OCI-LY7 (cell line): ENCODE measurements at regions of chr11 and their contacts with region 1.

Region 1: GRCh38 chr11:75248690-75249268 is 8.2 kb downstream of the TPBGL start:
- DNase-seq: peak; percentile 87
- H3K4me3 ChIP-seq: no peak overlapping the region
- H3K27ac ChIP-seq: no peak overlapping the region
- H3K4me1 ChIP-seq: no peaks in the 10 kb centered on the region
- CTCF ChIP-seq: peak; percentile 100

Region 2: DNA sequence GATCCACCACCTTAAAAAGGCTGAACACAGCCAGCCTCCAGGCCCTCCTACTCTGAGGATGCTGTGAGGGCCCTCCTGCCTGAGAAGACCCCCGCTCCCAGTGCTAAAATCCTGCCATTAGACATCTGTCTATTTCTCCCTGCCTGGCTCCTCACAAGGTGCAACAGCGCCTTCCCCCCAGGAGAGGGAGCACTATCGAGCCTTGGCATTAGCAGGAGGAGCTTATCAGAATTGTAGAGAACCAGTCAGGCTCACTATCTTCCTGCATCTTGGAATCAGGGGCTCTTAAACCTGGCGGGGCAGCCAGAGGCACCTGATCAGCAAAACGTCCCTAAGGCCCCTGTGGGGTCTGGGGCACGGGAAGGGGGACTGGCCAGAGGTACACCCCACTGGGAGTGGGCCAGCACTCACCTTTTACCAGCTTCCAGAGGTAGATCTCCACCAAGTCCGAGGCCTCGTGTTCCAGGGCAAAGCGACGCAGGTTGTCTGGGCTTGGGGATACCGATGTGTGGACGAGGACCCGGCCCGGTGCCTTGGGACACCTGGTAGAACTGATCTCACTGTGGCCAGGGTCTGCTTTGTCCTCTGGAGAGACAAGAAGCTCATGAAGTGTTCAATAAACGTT is 546.3 kb before region 1 on chr11:
- CTCF ChIA-PET with region 1: no interaction called
- POLR2A ChIA-PET with region 1: no interaction called
- intact Hi-C with region 1: loop called (anchors 5 kb)
- DNase-seq: peak; percentile 63
- H3K4me3 ChIP-seq: no peak overlapping the region
- H3K27ac ChIP-seq: no peak overlapping the region
- H3K4me1 ChIP-seq: no peaks in the 10 kb centered on the region
- CTCF ChIP-seq: peak; percentile 89

Region 3: DNA sequence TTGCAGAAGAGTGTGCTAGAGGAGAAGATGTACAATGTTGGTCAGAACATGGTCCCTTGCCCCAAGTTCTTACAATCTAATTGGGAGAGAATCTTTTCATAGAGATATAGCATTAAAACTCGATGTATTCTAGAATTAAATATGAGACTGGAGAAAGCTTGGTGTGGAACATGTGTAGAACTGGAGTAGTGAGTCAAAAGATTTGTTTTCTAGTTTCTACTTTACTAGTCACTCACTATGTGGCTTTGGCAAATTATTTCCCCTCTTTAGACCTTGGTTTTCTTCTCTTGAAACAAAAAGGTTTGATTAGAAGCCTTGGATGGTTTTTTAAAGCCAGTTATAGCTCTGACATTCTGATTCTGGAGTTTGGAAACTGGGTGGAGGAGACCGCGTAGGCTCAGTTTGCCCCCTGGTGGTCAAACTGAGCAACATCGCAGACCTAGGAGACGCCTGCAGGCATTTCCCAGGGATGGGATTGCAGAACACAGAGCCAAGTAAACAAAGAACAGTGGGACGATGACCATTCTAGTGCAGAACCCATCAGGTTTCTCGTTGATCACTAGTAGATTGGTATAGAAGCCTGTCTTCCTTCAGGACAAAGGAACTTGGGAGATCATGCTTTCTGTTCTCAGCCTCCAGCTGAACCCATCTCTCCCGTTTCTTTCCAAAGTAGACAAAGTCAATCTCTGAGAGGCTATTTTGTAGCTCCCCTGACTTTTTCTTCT is 509.1 kb before region 1 on chr11:
- CTCF ChIA-PET with region 1: no interaction called
- POLR2A ChIA-PET with region 1: no interaction called
- intact Hi-C with region 1: loop called (anchors 1 kb)
- DNase-seq: peak; percentile 71
- H3K4me3 ChIP-seq: no peak overlapping the region
- H3K27ac ChIP-seq: no peak overlapping the region
- H3K4me1 ChIP-seq: no peaks in the 10 kb centered on the region
- CTCF ChIP-seq: peak; percentile 96

Region 4: GRCh38 chr11:74929431-74930363 is 319.1 kb before region 1 on chr11:
- CTCF ChIA-PET with region 1: no interaction called
- POLR2A ChIA-PET with region 1: no interaction called
- intact Hi-C with region 1: loop called (anchors 2 kb)
- DNase-seq: peak; percentile 91
- H3K4me3 ChIP-seq: no peak overlapping the region
- H3K27ac ChIP-seq: no peak overlapping the region
- H3K4me1 ChIP-seq: no peaks in the 10 kb centered on the region
- CTCF ChIP-seq: peak; percentile 99

Region 5: GRCh38 chr11:75022759-75023396 is 225.9 kb before region 1 on chr11:
- CTCF ChIA-PET with region 1: interaction called, 5 read pairs
- POLR2A ChIA-PET with region 1: no interaction called
- intact Hi-C with region 1: loop called (anchors 1 kb)
- DNase-seq: peak; percentile 80
- H3K4me3 ChIP-seq: no peak overlapping the region
- H3K27ac ChIP-seq: no peak overlapping the region
- H3K4me1 ChIP-seq: no peaks in the 10 kb centered on the region
- CTCF ChIP-seq: peak; percentile 98

Region 6: DNA sequence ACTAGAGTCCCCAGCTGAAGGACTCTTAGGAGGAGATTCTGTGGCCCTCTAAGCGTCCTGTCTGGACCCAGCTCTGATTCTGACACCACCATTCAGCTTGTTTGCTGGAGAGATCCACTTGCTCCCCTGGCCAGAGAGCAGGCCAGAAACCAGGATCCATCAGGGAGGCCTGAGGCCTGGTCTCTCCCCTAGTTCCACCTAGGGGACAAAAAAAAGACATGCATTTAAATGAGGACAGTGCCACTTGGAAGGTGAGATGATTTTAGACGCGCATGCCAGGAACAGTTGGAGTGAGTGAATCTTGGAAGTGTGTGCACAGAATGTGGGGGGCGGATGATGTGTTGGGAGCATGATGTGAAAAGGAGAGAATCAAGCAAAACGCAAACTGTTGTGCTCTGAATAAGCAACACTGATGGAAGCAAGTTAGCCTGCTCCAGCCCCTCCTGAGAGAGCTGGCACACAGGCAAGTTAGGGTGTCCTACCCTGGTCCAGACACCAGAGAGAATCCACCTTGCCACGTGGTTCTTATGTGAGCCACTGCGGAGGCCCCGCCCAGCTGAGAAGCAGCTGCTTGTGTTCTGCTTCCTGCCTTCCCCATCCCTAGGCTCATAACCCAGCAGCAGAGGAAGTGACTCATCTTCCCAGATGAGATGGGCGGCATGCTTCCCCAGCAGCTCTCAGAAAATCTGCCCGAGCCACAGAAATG is 105.9 kb before region 1 on chr11:
- CTCF ChIA-PET with region 1: interaction called, 19 read pairs
- POLR2A ChIA-PET with region 1: interaction called, 4 read pairs
- intact Hi-C with region 1: loop called (anchors 1 kb)
- DNase-seq: peak; percentile 83
- H3K4me3 ChIP-seq: peak overlapping the region; percentile 11
- H3K27ac ChIP-seq: peak overlapping the region; percentile 69
- H3K4me1 ChIP-seq: peaks cover 56% of the 10 kb centered on the region
- CTCF ChIP-seq: no peak

Region 7: DNA sequence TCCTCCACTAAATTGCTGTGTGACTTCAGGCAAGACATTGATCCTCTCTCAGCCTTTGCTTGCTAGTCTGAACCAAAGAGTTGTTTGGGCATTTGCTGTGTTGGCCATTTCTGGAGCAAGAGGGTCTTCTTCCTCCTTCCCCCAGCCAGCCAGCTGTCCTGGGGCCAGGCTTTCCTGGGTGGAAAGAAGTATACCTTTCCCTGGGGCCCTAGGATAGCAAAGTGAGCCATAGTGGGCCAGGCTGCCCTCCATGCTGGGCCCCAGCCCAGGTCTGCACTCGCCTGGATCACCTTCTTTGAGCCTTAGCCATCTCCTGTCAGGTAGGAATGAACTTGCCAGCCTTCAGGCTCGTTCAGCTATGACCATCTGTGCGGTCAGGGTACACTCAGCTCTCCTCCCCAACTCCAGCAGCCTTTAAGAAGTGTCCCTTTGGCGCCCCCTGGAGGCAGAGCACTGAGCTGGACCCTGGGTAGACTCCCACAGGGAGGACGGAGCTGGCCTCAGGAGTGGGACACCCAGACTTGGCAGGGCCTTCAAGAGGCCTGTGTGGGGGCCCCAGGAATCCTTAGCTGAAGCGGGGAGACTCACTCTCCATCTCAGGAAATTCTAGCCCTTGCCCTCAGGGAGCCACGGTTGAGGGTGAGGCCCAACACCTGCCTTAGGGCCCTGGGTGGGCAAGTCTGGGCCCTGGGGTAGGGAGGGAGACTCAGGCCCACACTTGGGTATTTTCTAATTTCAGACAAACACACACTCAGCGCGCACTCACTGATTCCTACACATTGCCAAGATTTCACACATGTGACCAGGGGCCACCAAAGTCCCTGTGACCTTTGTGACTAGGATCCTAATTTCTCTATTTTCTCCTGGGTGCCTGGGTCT is 43.9 kb before region 1 on chr11:
- CTCF ChIA-PET with region 1: interaction called, 3 read pairs
- POLR2A ChIA-PET with region 1: interaction called, 3 read pairs
- intact Hi-C with region 1: loop called (anchors 5 kb)
- DNase-seq: peak; percentile 82
- H3K4me3 ChIP-seq: no peak overlapping the region
- H3K27ac ChIP-seq: no peak overlapping the region
- H3K4me1 ChIP-seq: peaks cover 8% of the 10 kb centered on the region
- CTCF ChIP-seq: peak; percentile 95